ENCODE measurements at regions of chr14 and their contacts with region 1.

Region 1: DNA sequence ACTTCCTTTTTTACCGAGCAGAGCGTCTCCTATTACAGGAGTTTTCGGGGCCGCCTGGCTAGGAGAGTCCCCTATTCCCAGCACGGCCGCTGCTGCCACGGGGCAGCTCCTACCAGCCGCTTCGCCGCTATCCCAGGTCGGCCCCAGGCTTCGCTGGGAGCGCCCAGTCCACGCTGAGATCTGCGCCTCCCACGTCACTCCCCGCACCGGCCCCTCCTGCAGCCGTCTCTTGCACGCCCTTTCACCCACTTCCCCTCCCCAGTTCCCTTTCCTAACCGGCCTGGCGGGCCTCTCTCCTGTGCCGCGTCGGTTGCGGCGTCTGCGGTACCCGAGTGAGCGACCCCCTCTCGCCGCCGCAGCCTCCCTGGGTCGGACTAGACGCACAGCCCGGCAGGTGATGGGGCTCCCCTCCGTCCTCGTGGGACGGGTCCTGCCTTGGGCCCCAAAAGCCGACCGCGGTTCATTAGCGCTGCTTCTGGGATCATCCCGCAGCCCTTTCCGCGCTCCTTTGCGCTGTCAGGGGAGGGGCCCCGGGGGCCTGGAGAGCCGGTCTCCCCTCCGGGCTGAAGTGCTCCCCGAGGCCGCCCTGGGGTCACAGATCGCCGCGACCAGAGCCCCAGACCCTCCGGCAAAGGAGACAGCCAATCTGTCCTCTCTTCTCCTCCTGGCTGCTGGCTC is 1318.4 kb downstream of the TMEM121 start:
- DNase-seq: peak; percentile 40 to 85 (median 69)
- ATAC-seq: peak; percentile 80
- H3K4me3 ChIP-seq: peak overlapping the region; percentile 87 to 89
- H3K4me3 Mint-ChIP-seq: peak overlapping the region; percentile 96
- H3K27ac ChIP-seq: peak overlapping the region; percentile 82 to 87
- H3K27ac Mint-ChIP-seq: peak overlapping the region; percentile 88
- H3K4me1 ChIP-seq: peaks cover 13% of the 10 kb centered on the region
- H3K4me1 Mint-ChIP-seq: peaks cover 45% of the 10 kb centered on the region
- H3K27me3 ChIP-seq: no peaks in the 10 kb centered on the region
- H3K27me3 Mint-ChIP-seq: no peaks in the 10 kb centered on the region
- CTCF ChIP-seq: no peak

Region 2: GRCh38 chr14:106790189-106791036 is 54.3 kb before region 1 on chr14:
- CTCF ChIA-PET with region 1: interaction called, 10 read pairs
- POLR2A ChIA-PET with region 1: no interaction called
- intact Hi-C with region 1: no loop called
- DNase-seq: peak; percentile 39 to 83 (median 73)
- ATAC-seq: peak; percentile 80
- H3K4me3 ChIP-seq: no peak overlapping the region
- H3K4me3 Mint-ChIP-seq: no peak overlapping the region
- H3K27ac ChIP-seq: no peak overlapping the region
- H3K27ac Mint-ChIP-seq: no peak overlapping the region
- H3K4me1 ChIP-seq: peaks cover 11% of the 10 kb centered on the region
- H3K4me1 Mint-ChIP-seq: peaks cover 16% of the 10 kb centered on the region
- H3K27me3 ChIP-seq: no peaks in the 10 kb centered on the region
- H3K27me3 Mint-ChIP-seq: peaks cover 8% of the 10 kb centered on the region
- CTCF ChIP-seq: peak; percentile 98

Region 3: DNA sequence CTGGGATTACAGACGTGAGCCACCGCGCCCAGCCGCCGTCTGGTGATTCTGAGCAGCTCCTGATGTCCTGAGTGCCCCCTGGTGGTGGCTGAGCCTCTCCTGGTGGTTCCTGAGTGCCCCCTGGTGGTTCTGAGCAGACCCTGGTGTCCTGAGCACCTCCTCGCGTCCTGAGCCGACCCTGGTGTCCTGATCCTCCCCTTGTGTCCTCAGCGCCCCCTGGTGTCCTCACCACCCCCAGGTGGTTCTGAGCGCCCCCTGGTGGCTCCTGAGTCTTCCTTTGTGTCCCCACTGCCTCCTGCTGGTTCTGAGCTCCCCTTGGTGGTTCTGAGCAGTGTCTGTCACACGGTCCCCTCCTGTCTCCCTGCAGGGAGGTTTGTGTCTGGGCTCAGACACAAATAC is 13.4 kb before region 1 on chr14:
- CTCF ChIA-PET with region 1: interaction called, 13 read pairs
- POLR2A ChIA-PET with region 1: interaction called, 4 read pairs
- intact Hi-C with region 1: loop called in 1 of 2 experiments (anchors 2 kb)
- DNase-seq: peak in 7 of 9 experiments; percentile 20 to 72 (median 66)
- ATAC-seq: peak; percentile 67
- H3K4me3 ChIP-seq: no peak overlapping the region
- H3K4me3 Mint-ChIP-seq: no peak overlapping the region
- H3K27ac ChIP-seq: no peak overlapping the region
- H3K27ac Mint-ChIP-seq: no peak overlapping the region
- H3K4me1 ChIP-seq: no peaks in the 10 kb centered on the region
- H3K4me1 Mint-ChIP-seq: no peaks in the 10 kb centered on the region
- H3K27me3 ChIP-seq: no peaks in the 10 kb centered on the region
- H3K27me3 Mint-ChIP-seq: peaks cover 6% of the 10 kb centered on the region
- CTCF ChIP-seq: peak; percentile 58

Region 4: GRCh38 chr14:106872611-106873446 is 28.1 kb after region 1 on chr14:
- CTCF ChIA-PET with region 1: interaction called, 88 read pairs
- POLR2A ChIA-PET with region 1: interaction called, 7 read pairs
- intact Hi-C with region 1: loop called (anchors 1 kb)
- DNase-seq: peak; percentile 66 to 87 (median 78)
- ATAC-seq: peak; percentile 89
- H3K4me3 ChIP-seq: peak overlapping the region; percentile 14 to 41
- H3K4me3 Mint-ChIP-seq: peak overlapping the region; percentile 58
- H3K27ac ChIP-seq: no peak overlapping the region
- H3K27ac Mint-ChIP-seq: no peak overlapping the region
- H3K4me1 ChIP-seq: peaks cover 8% of the 10 kb centered on the region
- H3K4me1 Mint-ChIP-seq: peaks cover 8% of the 10 kb centered on the region
- H3K27me3 ChIP-seq: peaks cover 0 to 2% of the 10 kb centered on the region in 2 experiments
- H3K27me3 Mint-ChIP-seq: peaks cover 27% of the 10 kb centered on the region
- CTCF ChIP-seq: peak; percentile 80

Measured in CD8-positive, alpha-beta T cell (primary cell).